ENCODE measurements at regions of chr3 and their contacts with region 1.

Region 1: GRCh38 chr3:160929595-160929994 is 173.6 kb downstream of the PPM1L start:
- DNase-seq: no peak
- ATAC-seq: peak; percentile 98
- H3K4me3 ChIP-seq: no peak overlapping the region
- H3K27ac ChIP-seq: no peak overlapping the region
- H3K4me1 ChIP-seq: no peaks in the 10 kb centered on the region
- H3K27me3 ChIP-seq: no peaks in the 10 kb centered on the region
- CTCF ChIP-seq: peak; percentile 42
- EP300 ChIP-seq: no peak
- POLR2A ChIP-seq: no peak
- RAD21 ChIP-seq: no peak

Region 2: GRCh38 chr3:160707187-160707794 is 222.3 kb before region 1 on chr3:
- CTCF ChIA-PET with region 1: no interaction called
- POLR2A ChIA-PET with region 1: no interaction called
- in situ Hi-C with region 1: loop called (anchors 10 kb)
- intact Hi-C with region 1: loop called (anchors 5 kb)
- DNase-seq: peak; percentile 38
- ATAC-seq: peak; percentile 70
- H3K4me3 ChIP-seq: no peak overlapping the region
- H3K27ac ChIP-seq: no peak overlapping the region
- H3K4me1 ChIP-seq: no peaks in the 10 kb centered on the region
- H3K27me3 ChIP-seq: no peaks in the 10 kb centered on the region
- CTCF ChIP-seq: peak; percentile 53
- EP300 ChIP-seq: no peak
- POLR2A ChIP-seq: no peak
- RAD21 ChIP-seq: no peak

Measured in HepG2 (cell line).